ENCODE measurements at regions of chr9 and their contacts with region 1.

Region 1: GRCh38 chr9:116572095-116572748 is 114.9 kb upstream of the TRIM32 start:
- DNase-seq: peak; percentile 93 to 96 (median 94)
- ATAC-seq: peak; percentile 91
- H3K4me3 ChIP-seq: no peak overlapping the region
- H3K27ac ChIP-seq: peak overlapping the region in 1 of 4 donors; percentile 15
- H3K4me1 ChIP-seq: peaks cover 57% of the 10 kb centered on the region
- H3K27me3 ChIP-seq: no peaks in the 10 kb centered on the region
- CTCF ChIP-seq: peak; percentile 81 to 97 (median 96)
- POLR2A ChIP-seq: no peak

Region 2: GRCh38 chr9:116149844-116150243 is 422.4 kb before region 1 on chr9:
- intact Hi-C with region 1: loop called (anchors 10 kb)
- DNase-seq: peak in 3 of 4 donors; percentile 28 to 41 (median 41)
- ATAC-seq: peak; percentile 57
- H3K4me3 ChIP-seq: no peak overlapping the region
- H3K27ac ChIP-seq: no peak overlapping the region
- H3K4me1 ChIP-seq: peaks cover 5% of the 10 kb centered on the region
- H3K27me3 ChIP-seq: peaks cover 0 to 5% of the 10 kb centered on the region in 2 donors
- CTCF ChIP-seq: peak in 6 of 7 experiments; percentile 54 to 70 (median 64)
- POLR2A ChIP-seq: no peak

Region 3: GRCh38 chr9:116646661-116647512 is 74.7 kb after region 1 on chr9:
- intact Hi-C with region 1: no loop called
- DNase-seq: peak in 1 of 4 donors; percentile 22
- ATAC-seq: peak; percentile 50
- H3K4me3 ChIP-seq: no peak overlapping the region
- H3K27ac ChIP-seq: no peak overlapping the region
- H3K4me1 ChIP-seq: no peaks in the 10 kb centered on the region
- H3K27me3 ChIP-seq: no peaks in the 10 kb centered on the region
- CTCF ChIP-seq: peak in 6 of 7 experiments; percentile 36 to 59 (median 55)
- POLR2A ChIP-seq: no peak